Adrenal gland (tissue), 19 donors: ENCODE measurements at regions of chr17 and their contacts with region 1.

Region 1: DNA sequence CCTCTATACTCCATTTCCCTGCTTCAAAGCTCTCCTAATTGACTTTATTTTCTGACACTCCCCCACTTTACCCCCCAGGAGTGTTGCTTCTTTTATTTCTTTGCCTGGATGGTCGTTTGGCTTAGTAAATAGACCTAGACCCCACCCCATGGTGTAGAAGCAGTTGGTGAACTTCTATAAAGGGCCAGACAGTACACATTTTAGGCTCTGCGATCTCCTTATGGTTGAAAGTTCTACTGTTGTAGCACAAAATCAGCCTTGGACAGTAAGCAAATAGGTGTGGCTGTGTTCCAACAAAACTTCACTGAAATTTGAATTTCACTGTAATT is 31.9 kb downstream of the ZNF287 start:
- DNase-seq: no peak
- H3K4me3 ChIP-seq: no peak overlapping the region
- H3K27ac ChIP-seq: peak overlapping the region in 2 of 5 donors; percentile 92 to 96
- H3K4me1 ChIP-seq: no peaks in the 10 kb centered on the region
- H3K27me3 ChIP-seq: no peaks in the 10 kb centered on the region
- CTCF ChIP-seq: no peak
- POLR2A ChIP-seq: no peak

Region 2: DNA sequence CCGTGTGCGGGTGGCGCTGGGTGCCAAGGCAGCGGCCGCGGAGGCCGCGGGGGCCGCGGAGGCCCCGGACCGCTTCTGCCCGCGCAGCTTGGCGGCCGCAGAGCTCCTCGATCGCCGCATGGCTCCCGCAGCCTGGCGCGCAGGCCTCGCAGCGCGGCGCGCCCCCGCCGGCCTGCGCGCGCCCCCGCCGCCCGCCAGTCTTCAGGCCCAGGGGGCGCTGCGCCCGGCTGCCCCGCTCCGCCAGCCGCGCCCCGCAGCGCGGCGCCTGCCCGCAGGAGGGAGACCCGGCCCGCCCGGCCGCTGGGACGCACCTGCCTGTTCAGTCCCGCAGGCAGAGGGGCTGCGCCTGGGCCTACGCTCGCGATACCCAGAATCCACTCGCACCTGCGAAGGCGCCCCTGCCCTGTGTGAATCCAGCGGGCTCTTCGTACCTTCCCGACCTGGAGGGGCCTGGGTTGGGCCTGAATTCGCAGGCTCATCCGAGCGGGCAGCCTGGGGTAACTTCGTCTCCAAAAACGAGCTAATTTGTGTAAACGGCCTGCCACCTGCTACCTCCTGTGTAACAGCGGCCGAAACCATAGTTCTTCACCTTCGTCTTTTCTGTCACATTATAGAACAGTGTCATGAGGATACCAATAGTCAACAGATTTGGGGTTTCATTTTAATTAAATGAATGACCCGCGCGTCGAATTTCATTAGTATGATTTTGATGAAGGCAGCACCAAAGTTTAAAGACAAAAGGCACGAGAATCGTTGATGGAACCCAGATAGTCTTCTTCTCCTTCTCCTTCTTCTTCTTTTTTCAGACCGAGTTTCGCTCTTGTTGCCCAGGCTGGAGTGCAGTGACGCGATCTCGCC is 183.5 kb before region 1 on chr17 and contains the start of gene CENPV:
- intact Hi-C with region 1: no loop called
- DNase-seq: peak in 6 of 7 donors; percentile 37 to 56 (median 42)
- H3K4me3 ChIP-seq: peak within 1 kb of the TSS in 3 of 4 donors; percentile 31 to 89 (median 68)
- H3K27ac ChIP-seq: peak within 1 kb of the TSS in 3 of 5 donors; percentile 33 to 78 (median 73)
- H3K4me1 ChIP-seq: peaks cover 7 to 13% of the 10 kb centered on the region in 2 donors
- H3K27me3 ChIP-seq: no peaks in the 10 kb centered on the region
- CTCF ChIP-seq: peak in 2 of 6 experiments; percentile 25 to 37
- POLR2A ChIP-seq: peak; percentile 30 to 48
- total RNA-seq, gene CENPV: 19.9 to 31.7 (median 26.5) TPM

Region 3: DNA sequence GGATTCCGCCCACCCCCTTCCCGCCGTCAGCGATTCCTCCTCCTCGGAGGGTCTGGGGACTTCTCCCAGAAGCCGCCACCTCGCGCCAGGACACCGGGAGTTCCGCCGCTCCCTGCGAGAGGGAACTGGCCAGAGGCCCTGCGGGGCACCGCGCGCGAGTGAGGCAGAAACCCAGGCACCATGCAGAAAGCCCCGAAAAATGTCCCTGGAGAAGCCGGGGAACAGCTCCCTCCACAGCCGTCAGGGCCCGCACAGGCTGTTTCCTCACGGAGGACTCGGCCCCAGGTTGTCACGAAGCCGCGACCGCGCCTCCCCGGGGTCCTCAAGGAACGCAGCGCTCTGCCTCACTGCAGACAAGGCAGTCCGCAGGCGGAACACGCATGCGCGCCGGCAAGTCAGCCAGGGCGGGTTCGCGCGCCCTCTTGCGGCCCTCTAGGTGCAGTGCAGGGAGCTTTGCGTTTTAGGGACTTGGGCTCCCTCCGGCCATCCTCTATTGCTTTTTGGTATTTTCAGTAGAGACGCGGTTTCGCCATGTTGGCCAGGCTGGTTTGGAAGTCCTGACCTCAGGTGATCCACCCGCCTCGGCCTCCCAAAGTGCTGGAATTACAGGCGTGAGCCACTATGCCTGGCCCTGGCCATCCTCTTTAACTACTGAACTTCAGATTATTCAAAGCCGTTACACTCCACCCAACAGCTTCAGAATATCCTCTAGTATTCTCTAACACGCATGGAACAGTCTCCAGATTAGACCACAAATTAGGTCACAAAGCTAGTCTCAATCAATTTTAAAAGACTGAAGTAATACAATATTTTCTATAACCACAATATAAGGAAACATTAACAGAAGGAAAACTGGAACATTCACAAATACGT is 52.2 kb after region 1 on chr17:
- intact Hi-C with region 1: loop called (anchors 5 to 10 kb)
- DNase-seq: peak; percentile 88 to 96 (median 90)
- H3K4me3 ChIP-seq: peak overlapping the region in 3 of 4 donors; percentile 51 to 63 (median 62)
- H3K27ac ChIP-seq: peak overlapping the region in 4 of 5 donors; percentile 48 to 66 (median 56)
- H3K4me1 ChIP-seq: peaks cover 0 to 9% of the 10 kb centered on the region in 2 donors
- H3K27me3 ChIP-seq: no peaks in the 10 kb centered on the region
- CTCF ChIP-seq: peak; percentile 87 to 99 (median 94)
- POLR2A ChIP-seq: peak; percentile 24 to 54

Region 4: GRCh38 chr17:16987830-16988601 is 450.9 kb after region 1 on chr17:
- intact Hi-C with region 1: loop called in 1 of 2 experiments (anchors 5 kb)
- DNase-seq: peak; percentile 53 to 81 (median 72)
- H3K4me3 ChIP-seq: no peak overlapping the region
- H3K27ac ChIP-seq: peak overlapping the region in 2 of 5 donors; percentile 39 to 76
- H3K4me1 ChIP-seq: peaks cover 0 to 12% of the 10 kb centered on the region in 2 donors
- H3K27me3 ChIP-seq: no peaks in the 10 kb centered on the region
- CTCF ChIP-seq: no peak
- POLR2A ChIP-seq: no peak